ENCODE measurements at regions of chr14 and their contacts with region 1.

Region 1: GRCh38 chr14:93115069-93115820 is 480 bp downstream of the ITPK1 start:
- DNase-seq: peak; percentile 70 to 94 (median 80)
- ATAC-seq: peak; percentile 89
- H3K4me3 ChIP-seq: peak overlapping the region; percentile 61
- H3K4me3 Mint-ChIP-seq: peak overlapping the region; percentile 67 to 91 (median 84)
- H3K27ac ChIP-seq: peak overlapping the region; percentile 68
- H3K27ac Mint-ChIP-seq: peak overlapping the region in 3 of 9 donors; percentile 29 to 97 (median 69)
- H3K4me1 ChIP-seq: peaks cover 17 to 22% of the 10 kb centered on the region in 2 donors
- H3K4me1 Mint-ChIP-seq: peaks cover 20 to 32% (median 26%) of the 10 kb centered on the region in 7 donors
- H3K27me3 ChIP-seq: no peaks in the 10 kb centered on the region
- H3K27me3 Mint-ChIP-seq: no peaks in the 10 kb centered on the region

Region 2: DNA sequence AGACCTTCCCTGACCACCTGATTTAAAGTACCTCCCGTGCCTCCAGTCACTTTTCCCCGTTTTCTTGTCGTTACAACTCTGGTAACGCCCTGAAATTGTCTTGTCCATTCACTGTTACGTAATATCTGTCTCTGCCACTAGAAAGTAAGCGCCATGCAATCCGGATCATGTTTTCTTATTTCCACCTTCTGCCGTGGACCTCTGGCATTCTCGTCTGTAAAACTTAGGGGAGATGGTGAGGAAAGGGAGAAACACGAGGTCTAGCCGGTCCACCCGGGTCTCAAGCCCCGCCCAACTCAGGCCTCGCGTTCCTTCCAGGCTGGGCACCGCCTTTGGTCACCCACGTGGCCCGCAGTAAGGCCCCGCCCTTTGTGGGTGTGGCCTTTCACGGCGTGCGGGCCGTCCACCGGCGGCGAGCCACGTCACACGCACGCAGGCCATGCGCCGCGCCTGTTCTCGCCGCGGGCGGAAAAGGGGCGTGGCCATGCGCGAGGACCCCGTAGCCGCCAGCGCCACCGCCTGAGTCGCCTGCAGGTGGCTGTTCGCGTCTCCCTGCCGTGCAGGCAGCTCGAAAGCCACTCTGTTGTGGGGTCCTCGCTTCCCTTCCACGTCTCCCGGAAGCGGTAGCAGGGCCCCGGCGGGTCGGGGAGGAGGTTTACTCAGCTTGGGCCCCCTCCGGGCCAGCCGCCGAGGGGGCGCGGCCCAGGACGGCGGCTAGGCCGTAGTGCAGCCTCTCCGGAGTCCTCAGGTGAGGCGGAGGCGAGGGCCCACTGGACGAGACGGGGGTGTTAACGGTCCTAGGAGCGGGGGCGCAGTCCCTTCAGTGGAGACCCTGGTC is 321.3 kb before region 1 on chr14 and contains the start of gene GOLGA5:
- CTCF ChIA-PET with region 1: no interaction called
- POLR2A ChIA-PET with region 1: no interaction called
- intact Hi-C with region 1: loop called (anchors 1 to 5 kb)
- DNase-seq: peak; percentile 97 to 100 (median 99)
- ATAC-seq: peak; percentile 97
- H3K4me3 ChIP-seq: peak within 1 kb of the TSS; percentile 98
- H3K4me3 Mint-ChIP-seq: peak within 1 kb of the TSS; percentile 78 to 96 (median 92)
- H3K27ac ChIP-seq: peak within 1 kb of the TSS; percentile 91
- H3K27ac Mint-ChIP-seq: peak within 1 kb of the TSS; percentile 78 to 98 (median 95)
- H3K4me1 ChIP-seq: peaks cover 15 to 20% of the 10 kb centered on the region in 2 donors
- H3K4me1 Mint-ChIP-seq: peaks cover 24 to 45% (median 39%) of the 10 kb centered on the region in 7 donors
- H3K27me3 ChIP-seq: no peaks in the 10 kb centered on the region
- H3K27me3 Mint-ChIP-seq: peaks cover 0 to 9% (median 0%) of the 10 kb centered on the region in 5 donors
- total RNA-seq, gene GOLGA5: 9.7 to 25.8 (median 23.5) TPM

Region 3: GRCh38 chr14:92890830-92891588 is 224.2 kb before region 1 on chr14:
- CTCF ChIA-PET with region 1: no interaction called
- POLR2A ChIA-PET with region 1: no interaction called
- intact Hi-C with region 1: no loop called
- DNase-seq: no peak
- ATAC-seq: no peak
- H3K4me3 ChIP-seq: no peak overlapping the region
- H3K4me3 Mint-ChIP-seq: no peak overlapping the region
- H3K27ac ChIP-seq: no peak overlapping the region
- H3K27ac Mint-ChIP-seq: no peak overlapping the region
- H3K4me1 ChIP-seq: no peaks in the 10 kb centered on the region
- H3K4me1 Mint-ChIP-seq: peaks cover 0 to 3% (median 0%) of the 10 kb centered on the region in 7 donors
- H3K27me3 ChIP-seq: no peaks in the 10 kb centered on the region
- H3K27me3 Mint-ChIP-seq: peaks cover 0 to 17% (median 3%) of the 10 kb centered on the region in 5 donors

Region 4: DNA sequence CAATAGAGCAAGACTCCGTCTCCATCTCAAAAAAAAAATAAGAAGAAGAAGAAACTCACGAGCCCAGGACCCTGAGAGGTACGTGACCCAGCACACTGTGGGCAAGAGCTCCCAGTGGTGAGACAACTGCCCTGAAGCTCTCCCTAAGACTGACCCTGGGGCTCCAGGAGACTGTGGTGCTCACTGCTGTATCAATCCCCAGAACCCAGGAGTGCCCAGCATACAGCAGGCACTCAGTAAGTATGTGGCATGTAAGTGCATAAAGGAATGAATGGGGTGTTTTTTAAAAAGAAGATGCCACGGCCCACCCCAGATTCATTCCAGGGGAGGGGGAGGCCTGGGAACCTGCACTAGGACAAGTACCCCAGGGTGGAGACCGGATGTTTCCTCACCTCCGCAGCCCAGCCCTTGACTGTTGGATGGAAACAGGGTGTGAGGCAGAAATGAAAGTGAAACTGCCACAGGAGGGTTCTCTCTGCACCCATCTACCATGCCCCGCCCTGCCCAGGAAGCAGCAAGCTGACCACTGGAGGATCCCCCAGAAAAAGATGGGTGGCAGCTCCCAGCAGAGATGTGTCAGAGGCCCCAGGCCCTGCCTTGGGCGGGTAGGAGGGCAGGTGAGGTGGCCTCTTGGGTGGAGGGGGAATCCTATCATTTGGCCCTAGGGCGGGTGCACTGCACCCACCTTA is 11.7 kb before region 1 on chr14:
- CTCF ChIA-PET with region 1: interaction called, 35 read pairs
- POLR2A ChIA-PET with region 1: interaction called, 9 read pairs
- intact Hi-C with region 1: loop called (anchors 1 kb)
- DNase-seq: peak in 8 of 9 donors; percentile 51 to 68 (median 66)
- ATAC-seq: peak; percentile 90
- H3K4me3 ChIP-seq: peak overlapping the region; percentile 64
- H3K4me3 Mint-ChIP-seq: peak overlapping the region; percentile 77 to 89 (median 84)
- H3K27ac ChIP-seq: peak overlapping the region; percentile 73
- H3K27ac Mint-ChIP-seq: peak overlapping the region; percentile 90 to 98 (median 94)
- H3K4me1 ChIP-seq: peaks cover 12 to 15% of the 10 kb centered on the region in 2 donors
- H3K4me1 Mint-ChIP-seq: peaks cover 15 to 60% (median 23%) of the 10 kb centered on the region in 7 donors
- H3K27me3 ChIP-seq: no peaks in the 10 kb centered on the region
- H3K27me3 Mint-ChIP-seq: no peaks in the 10 kb centered on the region

Region 5: DNA sequence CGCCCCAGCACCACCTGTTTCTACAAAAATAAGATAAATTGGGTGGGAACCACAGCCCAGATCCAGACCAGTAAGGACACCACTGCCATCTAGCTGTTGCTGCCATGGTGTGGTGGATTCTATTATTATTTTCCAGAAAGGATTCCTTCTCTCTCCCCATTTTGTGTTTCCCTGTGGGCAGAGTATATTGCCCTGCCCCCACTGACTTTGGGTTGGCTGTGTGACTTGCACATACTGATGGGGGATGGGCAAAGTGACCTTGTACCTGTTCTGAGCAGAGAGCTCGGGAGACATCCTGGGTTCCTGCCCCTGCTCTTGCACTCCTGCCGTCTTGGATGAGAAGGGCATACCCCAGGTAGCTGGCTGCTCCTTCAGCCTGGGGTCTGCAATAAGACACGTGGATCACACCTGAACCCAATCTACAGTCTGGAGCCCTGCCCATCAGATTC is 45.1 kb after region 1 on chr14:
- CTCF ChIA-PET with region 1: no interaction called
- POLR2A ChIA-PET with region 1: no interaction called
- intact Hi-C with region 1: loop called in 1 of 2 experiments (anchors 1 kb)
- DNase-seq: no peak
- ATAC-seq: peak; percentile 38
- H3K4me3 ChIP-seq: no peak overlapping the region
- H3K4me3 Mint-ChIP-seq: no peak overlapping the region
- H3K27ac ChIP-seq: no peak overlapping the region
- H3K27ac Mint-ChIP-seq: peak overlapping the region in 1 of 9 donors; percentile 57
- H3K4me1 ChIP-seq: no peaks in the 10 kb centered on the region
- H3K4me1 Mint-ChIP-seq: no peaks in the 10 kb centered on the region
- H3K27me3 ChIP-seq: no peaks in the 10 kb centered on the region
- H3K27me3 Mint-ChIP-seq: no peaks in the 10 kb centered on the region

Region 6: DNA sequence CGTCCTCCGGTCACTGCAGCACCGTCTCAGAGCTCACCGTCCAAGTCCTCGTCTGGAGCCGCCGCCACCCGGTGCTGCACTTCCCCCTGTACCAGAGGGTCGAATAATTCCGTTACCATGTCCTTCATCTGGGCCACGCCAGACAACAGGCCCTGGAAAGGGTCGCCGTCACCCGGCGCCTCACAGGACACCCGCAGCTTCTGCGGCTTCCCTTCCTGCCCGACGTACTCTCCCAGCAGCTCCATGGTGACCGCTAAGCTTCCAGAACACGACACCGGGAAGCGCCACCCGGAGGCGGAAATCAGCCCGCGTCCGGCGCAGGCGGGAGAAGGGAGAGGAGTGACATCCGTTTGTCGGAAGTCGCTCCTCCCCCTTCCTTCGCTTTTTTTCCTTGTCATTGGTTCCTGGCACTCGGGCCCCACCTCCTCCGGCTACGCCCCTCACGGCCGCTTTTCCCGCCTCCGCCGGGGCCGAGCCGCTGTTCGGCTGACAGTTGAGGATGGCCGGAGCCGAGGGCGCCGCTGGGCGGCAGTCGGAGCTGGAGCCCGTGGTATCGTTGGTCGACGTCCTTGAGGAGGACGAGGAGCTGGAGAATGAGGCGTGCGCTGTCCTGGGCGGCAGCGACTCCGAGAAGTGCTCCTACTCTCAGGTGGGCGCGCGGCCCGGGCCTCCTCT is 91.7 kb after region 1 on chr14 and contains the starts of genes GON7 and UBR7:
- CTCF ChIA-PET with region 1: interaction called, 20 read pairs
- POLR2A ChIA-PET with region 1: interaction called, 7 read pairs
- intact Hi-C with region 1: loop called (anchors 1 kb)
- DNase-seq: peak; percentile 66 to 91 (median 83)
- ATAC-seq: peak; percentile 99
- H3K4me3 ChIP-seq: peak within 1 kb of the TSS; percentile 81
- H3K4me3 Mint-ChIP-seq: peak within 1 kb of the TSS; percentile 75 to 99 (median 94)
- H3K27ac ChIP-seq: peak within 1 kb of the TSS; percentile 87
- H3K27ac Mint-ChIP-seq: peak within 1 kb of the TSS; percentile 88 to 97 (median 93)
- H3K4me1 ChIP-seq: peaks cover 13 to 22% of the 10 kb centered on the region in 2 donors
- H3K4me1 Mint-ChIP-seq: peaks cover 22 to 65% (median 50%) of the 10 kb centered on the region in 7 donors
- H3K27me3 ChIP-seq: no peaks in the 10 kb centered on the region
- H3K27me3 Mint-ChIP-seq: no peaks in the 10 kb centered on the region
- total RNA-seq, gene GON7: 3.5 to 17.4 (median 8.3) TPM
- total RNA-seq, gene UBR7: 10.1 to 31.3 (median 13.5) TPM

Region 7: GRCh38 chr14:93346929-93347721 is 231.9 kb after region 1 on chr14 and contains the start of gene COX8C:
- CTCF ChIA-PET with region 1: no interaction called
- POLR2A ChIA-PET with region 1: no interaction called
- intact Hi-C with region 1: no loop called
- DNase-seq: no peak
- ATAC-seq: no peak
- H3K4me3 ChIP-seq: no peak within 1 kb of the TSS
- H3K4me3 Mint-ChIP-seq: no peak within 1 kb of the TSS
- H3K27ac ChIP-seq: no peak within 1 kb of the TSS
- H3K27ac Mint-ChIP-seq: no peak within 1 kb of the TSS
- H3K4me1 ChIP-seq: no peaks in the 10 kb centered on the region
- H3K4me1 Mint-ChIP-seq: no peaks in the 10 kb centered on the region
- H3K27me3 ChIP-seq: no peaks in the 10 kb centered on the region
- H3K27me3 Mint-ChIP-seq: peaks cover 0 to 8% (median 3%) of the 10 kb centered on the region in 5 donors
- total RNA-seq, gene COX8C: not detected

Region 8: DNA sequence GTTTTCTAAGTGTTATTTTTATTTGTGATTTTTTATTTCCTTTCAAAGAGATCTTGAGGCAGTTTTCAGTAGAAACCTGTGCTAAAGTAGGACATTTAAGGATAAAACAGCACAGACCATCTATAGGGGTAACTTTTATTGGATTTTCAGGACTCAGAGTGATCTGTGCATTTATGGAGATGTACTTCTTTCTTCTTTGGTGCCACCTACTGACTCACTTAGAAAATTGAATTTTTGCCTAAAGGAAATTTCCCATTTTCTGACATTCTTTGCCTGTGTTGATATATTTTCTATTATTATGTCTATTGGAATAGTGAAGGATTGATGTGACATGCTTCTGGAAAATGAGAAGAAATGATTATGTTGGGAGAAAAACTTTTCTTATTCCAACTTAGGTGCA is 428.5 kb after region 1 on chr14:
- CTCF ChIA-PET with region 1: no interaction called
- POLR2A ChIA-PET with region 1: no interaction called
- intact Hi-C with region 1: loop called in 1 of 2 experiments (anchors 5 kb)
- DNase-seq: no peak
- ATAC-seq: no peak
- H3K4me3 ChIP-seq: no peak overlapping the region
- H3K4me3 Mint-ChIP-seq: no peak overlapping the region
- H3K27ac ChIP-seq: no peak overlapping the region
- H3K27ac Mint-ChIP-seq: no peak overlapping the region
- H3K4me1 ChIP-seq: no peaks in the 10 kb centered on the region
- H3K4me1 Mint-ChIP-seq: no peaks in the 10 kb centered on the region
- H3K27me3 ChIP-seq: peaks cover 0 to 2% of the 10 kb centered on the region in 2 donors
- H3K27me3 Mint-ChIP-seq: peaks cover 18 to 42% (median 31%) of the 10 kb centered on the region in 5 donors

Region 9: DNA sequence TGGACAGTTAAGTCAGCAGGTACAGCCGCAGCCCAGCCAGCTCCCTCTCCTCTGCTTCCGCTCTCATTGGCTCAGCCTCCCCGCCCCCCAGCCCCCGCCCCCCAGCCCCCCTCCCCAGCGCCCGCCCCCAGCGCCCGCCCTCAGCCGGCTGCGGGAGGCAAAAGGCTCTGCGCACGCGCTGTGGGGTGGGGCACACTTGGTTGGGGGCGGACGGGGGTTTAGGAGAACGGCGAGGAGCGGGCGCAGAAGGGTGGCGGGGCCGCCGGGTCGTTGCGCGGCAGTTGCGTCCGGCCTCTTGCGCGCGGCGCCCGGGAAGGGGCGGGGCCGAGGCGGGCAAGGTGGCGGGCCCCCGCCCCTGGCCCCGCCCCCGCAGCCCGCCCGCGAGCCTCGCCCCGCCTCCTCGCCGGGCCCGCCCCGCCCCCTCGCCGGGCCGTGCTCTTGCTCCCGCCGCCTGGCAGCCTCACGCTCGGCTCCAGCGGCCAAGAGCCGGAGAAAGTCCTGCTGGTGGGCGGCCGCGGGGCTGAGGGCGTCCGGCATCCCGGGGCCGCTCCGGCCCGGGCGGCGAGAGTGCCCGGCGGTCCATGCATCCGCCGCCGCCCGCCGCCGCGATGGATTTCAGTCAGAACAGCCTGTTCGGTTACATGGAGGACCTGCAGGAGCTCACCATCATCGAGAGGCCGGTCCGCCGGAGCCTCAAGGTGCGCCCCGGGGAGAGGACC is 1058.8 kb after region 1 on chr14 and contains the start of gene PPP4R4:
- CTCF ChIA-PET with region 1: no interaction called
- POLR2A ChIA-PET with region 1: no interaction called
- intact Hi-C with region 1: loop called in 1 of 2 experiments (anchors 1 kb)
- DNase-seq: peak; percentile 87 to 92 (median 88)
- ATAC-seq: peak; percentile 96
- H3K4me3 ChIP-seq: peak within 1 kb of the TSS; percentile 77
- H3K4me3 Mint-ChIP-seq: peak within 1 kb of the TSS; percentile 80 to 94 (median 88)
- H3K27ac ChIP-seq: peak within 1 kb of the TSS; percentile 53
- H3K27ac Mint-ChIP-seq: peak within 1 kb of the TSS; percentile 11 to 86 (median 75)
- H3K4me1 ChIP-seq: peaks cover 0 to 16% of the 10 kb centered on the region in 2 donors
- H3K4me1 Mint-ChIP-seq: peaks cover 15 to 29% (median 22%) of the 10 kb centered on the region in 7 donors
- H3K27me3 ChIP-seq: no peaks in the 10 kb centered on the region
- H3K27me3 Mint-ChIP-seq: peaks cover 0 to 59% (median 5%) of the 10 kb centered on the region in 5 donors
- total RNA-seq, gene PPP4R4: 0.44 to 2.4 (median 1.7) TPM

Measured in naive thymus-derived CD4-positive, alpha-beta T cell (primary cell).